Uterus (tissue), 4 donors: ENCODE measurements at regions of chr9 and their contacts with region 1.

Region 1: GRCh38 chr9:92482329-92482728 is at the start of gene ASPN:
- DNase-seq: no peak
- H3K4me3 ChIP-seq: peak within 1 kb of the TSS; percentile 19 to 22
- H3K27ac ChIP-seq: peak within 1 kb of the TSS; percentile 81 to 96
- H3K4me1 ChIP-seq: peaks cover under 1 to 7% of the 10 kb centered on the region in 2 donors
- H3K27me3 ChIP-seq: no peaks in the 10 kb centered on the region
- CTCF ChIP-seq: no peak
- POLR2A ChIP-seq: peak in 1 of 2 donors; percentile 54
- total RNA-seq, gene ASPN: 29.5 to 160 (median 73.0) TPM

Region 2: DNA sequence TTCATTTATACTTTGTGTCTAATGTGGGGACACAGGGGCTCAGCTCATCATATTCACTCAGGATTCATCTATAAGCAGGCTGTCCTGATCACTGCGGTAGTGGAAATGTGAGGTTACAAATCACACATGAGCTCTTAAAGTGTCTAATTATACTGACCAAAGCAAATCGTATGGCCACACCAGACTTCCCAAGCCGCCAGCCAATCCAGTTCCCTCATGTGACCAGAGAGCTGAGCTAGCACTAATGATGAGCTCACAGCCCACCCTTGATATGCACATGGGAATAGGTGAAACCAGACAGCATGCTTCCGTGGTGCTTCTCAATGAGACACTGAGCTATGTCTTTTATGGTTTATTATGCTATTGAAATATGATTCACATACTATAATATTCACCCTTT is 35.9 kb after region 1 on chr9:
- intact Hi-C with region 1: loop called (anchors 2 kb)
- DNase-seq: no peak
- H3K4me3 ChIP-seq: no peak overlapping the region
- H3K27ac ChIP-seq: no peak overlapping the region
- H3K4me1 ChIP-seq: no peaks in the 10 kb centered on the region
- H3K27me3 ChIP-seq: no peaks in the 10 kb centered on the region
- CTCF ChIP-seq: no peak
- POLR2A ChIP-seq: no peak